Prostate gland (tissue), 2 donors: ENCODE measurements at regions of chr6 and their contacts with region 1.

Region 1: GRCh38 chr6:7589949-7590917 is at the start of gene SNRNP48:
- DNase-seq: peak; percentile 95
- H3K4me3 ChIP-seq: peak within 1 kb of the TSS; percentile 82 to 97
- H3K27ac ChIP-seq: peak within 1 kb of the TSS; percentile 58 to 61
- H3K4me1 ChIP-seq: no peaks in the 10 kb centered on the region
- H3K27me3 ChIP-seq: no peaks in the 10 kb centered on the region
- CTCF ChIP-seq: peak in 2 of 4 experiments; percentile 15 to 16
- POLR2A ChIP-seq: peak; percentile 84
- total RNA-seq, gene SNRNP48: 13.1 to 19.9 TPM

Region 2: DNA sequence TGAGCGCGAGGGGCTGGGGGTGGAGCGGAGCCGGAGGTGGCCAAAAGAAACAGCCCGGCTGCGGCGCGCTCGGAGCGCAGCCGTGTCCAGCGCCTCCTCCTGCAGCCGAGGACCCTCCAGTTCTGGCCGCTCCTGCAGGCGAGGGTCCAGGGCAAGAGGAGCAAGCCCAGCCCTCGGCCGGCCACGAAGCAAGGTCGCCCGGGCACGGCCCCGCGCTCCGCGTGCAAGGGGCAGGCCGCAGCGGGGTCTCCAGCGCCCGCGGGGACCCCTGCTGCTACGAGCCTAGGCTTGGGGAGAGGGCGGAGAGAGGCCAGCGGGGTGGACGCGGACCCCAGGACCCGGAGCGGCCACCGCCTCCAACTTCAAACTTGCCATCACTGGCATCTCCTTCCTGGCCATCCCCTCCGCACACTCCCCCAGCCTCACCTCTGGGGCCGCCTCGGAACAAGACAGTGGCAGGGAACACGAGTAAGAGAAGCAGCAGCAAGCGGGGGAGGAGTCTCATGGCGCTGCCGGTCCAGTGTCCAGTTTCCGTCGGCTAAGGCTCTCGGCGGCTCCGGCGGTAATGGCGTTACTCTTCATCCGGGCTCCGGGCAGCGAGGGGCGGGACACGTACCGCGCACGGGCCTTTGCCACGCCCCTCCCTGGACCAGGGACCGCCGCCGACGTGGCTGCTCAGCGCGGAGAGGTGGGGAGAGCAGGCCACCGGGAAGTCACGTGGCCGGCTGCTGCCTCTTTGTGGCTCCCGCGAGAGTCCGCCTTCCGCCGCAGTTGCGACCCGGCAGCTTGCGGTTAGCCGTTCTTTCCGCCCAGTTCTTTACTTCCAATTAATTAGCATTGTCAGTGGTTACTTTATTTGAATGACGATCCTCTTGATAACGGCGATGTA is 277.4 kb before region 1 on chr6 and contains the start of gene SSR1:
- intact Hi-C with region 1: loop called (anchors 2 kb)
- DNase-seq: peak; percentile 97
- H3K4me3 ChIP-seq: peak within 1 kb of the TSS; percentile 72 to 99
- H3K27ac ChIP-seq: peak within 1 kb of the TSS; percentile 93 to 95
- H3K4me1 ChIP-seq: no peaks in the 10 kb centered on the region
- H3K27me3 ChIP-seq: no peaks in the 10 kb centered on the region
- CTCF ChIP-seq: peak in 1 of 4 experiments; percentile 20
- POLR2A ChIP-seq: peak; percentile 84
- total RNA-seq, gene SSR1: 34.3 to 89.5 TPM